Esophagus muscularis mucosa (tissue), 4 donors: ENCODE measurements at regions of chr17 and their contacts with region 1.

Region 1: GRCh38 chr17:5065227-5065744 is 13.0 kb upstream of the ZFP3 start:
- DNase-seq: no peak
- H3K4me3 ChIP-seq: no peak overlapping the region
- H3K27ac ChIP-seq: no peak overlapping the region
- H3K4me1 ChIP-seq: peaks cover 0 to 4% (median 0%) of the 10 kb centered on the region in 4 donors
- H3K27me3 ChIP-seq: peaks cover 0 to 6% (median 0%) of the 10 kb centered on the region in 4 donors
- CTCF ChIP-seq: no peak
- EP300 ChIP-seq: no peak
- POLR2A ChIP-seq: no peak

Region 2: GRCh38 chr17:4610162-4610561 is 455.1 kb before region 1 on chr17:
- intact Hi-C with region 1: no loop called
- DNase-seq: no peak
- H3K4me3 ChIP-seq: no peak overlapping the region
- H3K27ac ChIP-seq: peak overlapping the region in 3 of 4 donors; percentile 30 to 77 (median 60)
- H3K4me1 ChIP-seq: peaks cover 17 to 49% (median 40%) of the 10 kb centered on the region in 4 donors
- H3K27me3 ChIP-seq: no peaks in the 10 kb centered on the region
- CTCF ChIP-seq: no peak
- EP300 ChIP-seq: no peak
- POLR2A ChIP-seq: no peak

Region 3: GRCh38 chr17:4980644-4981216 is 84.6 kb before region 1 on chr17:
- intact Hi-C with region 1: loop called (anchors 2 kb)
- DNase-seq: no peak
- H3K4me3 ChIP-seq: no peak overlapping the region
- H3K27ac ChIP-seq: peak overlapping the region in 1 of 4 donors; percentile 22
- H3K4me1 ChIP-seq: peaks cover 2 to 17% (median 10%) of the 10 kb centered on the region in 4 donors
- H3K27me3 ChIP-seq: no peaks in the 10 kb centered on the region
- CTCF ChIP-seq: peak; percentile 72 to 86 (median 83)
- EP300 ChIP-seq: no peak
- POLR2A ChIP-seq: no peak

Region 4: DNA sequence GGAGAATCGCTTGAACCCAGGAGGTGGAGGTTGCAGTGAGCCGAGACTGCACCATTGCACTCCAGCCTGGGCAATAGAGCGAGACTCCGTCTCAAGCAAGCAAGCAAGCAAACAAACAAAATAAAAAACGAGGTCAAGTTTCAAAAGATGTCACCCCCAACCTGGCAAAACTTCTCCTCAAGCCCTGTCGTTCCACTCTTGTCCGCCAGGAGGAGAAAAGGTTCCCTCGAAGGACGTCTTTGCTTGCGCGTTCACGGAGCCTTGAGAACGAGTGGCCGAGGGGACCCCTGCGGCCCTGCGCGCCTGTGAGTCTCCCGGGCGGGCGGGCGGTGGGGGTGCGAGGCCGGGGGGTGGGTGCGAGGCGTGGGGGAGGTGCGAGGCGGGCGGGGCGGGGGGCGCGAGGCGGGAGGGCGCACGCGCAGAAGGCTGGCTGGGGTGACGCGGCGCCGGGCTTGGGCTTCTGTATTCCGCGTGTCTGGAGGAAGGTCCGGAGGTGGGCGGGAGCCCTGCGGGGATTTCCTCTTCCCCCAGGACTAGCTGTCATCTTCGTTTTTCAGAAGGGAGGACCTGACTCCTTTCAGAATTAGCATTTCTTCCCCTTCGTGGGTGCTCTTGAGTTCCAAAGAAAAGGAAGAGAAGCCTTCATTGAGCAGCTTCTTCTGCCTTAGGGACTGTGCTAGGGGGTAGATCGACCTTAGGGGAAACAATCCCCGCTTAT is 33.8 kb before region 1 on chr17:
- intact Hi-C with region 1: loop called (anchors 2 kb)
- DNase-seq: peak; percentile 95
- H3K4me3 ChIP-seq: peak overlapping the region; percentile 55 to 68 (median 60)
- H3K27ac ChIP-seq: peak overlapping the region; percentile 32 to 51 (median 46)
- H3K4me1 ChIP-seq: peaks cover 3 to 18% (median 14%) of the 10 kb centered on the region in 4 donors
- H3K27me3 ChIP-seq: peaks cover 0 to 25% (median 3%) of the 10 kb centered on the region in 4 donors
- CTCF ChIP-seq: peak; percentile 84 to 86 (median 84)
- EP300 ChIP-seq: no peak
- POLR2A ChIP-seq: no peak

Region 5: DNA sequence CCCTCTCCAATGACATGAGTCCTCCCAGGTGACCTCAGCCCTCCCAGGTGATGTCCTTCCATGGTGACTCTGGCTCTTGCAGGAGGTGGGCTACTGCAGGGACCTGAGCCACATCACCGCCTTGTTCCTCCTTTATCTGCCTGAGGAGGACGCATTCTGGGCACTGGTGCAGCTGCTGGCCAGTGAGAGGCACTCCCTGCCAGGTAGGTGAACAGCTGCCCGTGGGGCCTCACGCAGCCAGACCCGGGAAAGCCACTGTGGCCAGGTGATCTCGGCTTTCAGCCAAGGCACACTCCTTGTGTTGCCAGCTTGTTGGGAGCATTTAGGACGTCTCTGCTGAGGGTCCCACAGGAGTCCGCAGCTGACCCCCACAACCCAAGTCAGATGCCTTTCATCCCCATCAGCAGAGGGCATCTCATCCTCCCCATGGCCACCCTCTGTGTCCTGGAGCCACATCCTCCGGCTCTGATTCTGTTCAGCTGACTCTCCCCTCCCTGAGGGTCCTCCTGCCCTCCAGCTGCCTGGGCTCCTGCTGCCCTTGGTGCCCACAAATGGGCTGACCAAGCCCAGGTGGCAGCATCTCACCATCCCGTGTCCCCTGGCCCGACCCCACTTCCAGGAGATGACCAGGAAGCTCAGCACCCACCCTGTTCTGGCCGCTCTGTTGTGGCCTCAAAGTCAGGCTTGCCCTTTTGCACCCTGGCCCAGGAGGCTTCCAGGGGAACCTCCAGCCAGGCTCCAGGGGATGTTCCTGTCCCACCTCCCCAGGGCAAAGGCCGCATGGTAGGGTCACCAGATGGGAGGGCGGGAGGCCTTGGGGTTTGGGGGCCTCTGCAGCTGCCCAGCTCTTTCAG is 70.7 kb after region 1 on chr17:
- intact Hi-C with region 1: no loop called
- DNase-seq: peak; percentile 80
- H3K4me3 ChIP-seq: no peak overlapping the region
- H3K27ac ChIP-seq: no peak overlapping the region
- H3K4me1 ChIP-seq: no peaks in the 10 kb centered on the region
- H3K27me3 ChIP-seq: peaks cover 0 to 4% (median 0%) of the 10 kb centered on the region in 4 donors
- CTCF ChIP-seq: no peak
- EP300 ChIP-seq: no peak
- POLR2A ChIP-seq: no peak